Mammary epithelial cell (primary cell): ENCODE measurements at regions of chr3 and their contacts with region 1.

Region 1: GRCh38 chr3:69161587-69162307 is 39.4 kb upstream of the LMOD3 start:
- DNase-seq: peak; percentile 47
- H3K4me3 ChIP-seq: no peak overlapping the region
- H3K27ac ChIP-seq: no peak overlapping the region
- H3K4me1 ChIP-seq: no peaks in the 10 kb centered on the region
- H3K27me3 ChIP-seq: no peaks in the 10 kb centered on the region
- CTCF ChIP-seq: peak; percentile 90 to 93

Region 2: GRCh38 chr3:69120879-69121464 is 40.8 kb before region 1 on chr3:
- CTCF ChIA-PET with region 1: no interaction called
- dilution Hi-C with region 1: no loop called
- in situ Hi-C with region 1: no loop called
- intact Hi-C with region 1: loop called (anchors 2 kb)
- DNase-seq: peak; percentile 67
- H3K4me3 ChIP-seq: no peak overlapping the region
- H3K27ac ChIP-seq: no peak overlapping the region
- H3K4me1 ChIP-seq: peaks cover 12% of the 10 kb centered on the region
- H3K27me3 ChIP-seq: no peaks in the 10 kb centered on the region
- CTCF ChIP-seq: peak; percentile 96 to 99

Region 3: GRCh38 chr3:69260216-69260787 is 98.6 kb after region 1 on chr3:
- CTCF ChIA-PET with region 1: no interaction called
- dilution Hi-C with region 1: no loop called
- in situ Hi-C with region 1: no loop called
- intact Hi-C with region 1: no loop called
- DNase-seq: no peak
- H3K4me3 ChIP-seq: no peak overlapping the region
- H3K27ac ChIP-seq: no peak overlapping the region
- H3K4me1 ChIP-seq: no peaks in the 10 kb centered on the region
- H3K27me3 ChIP-seq: no peaks in the 10 kb centered on the region
- CTCF ChIP-seq: no peak

Region 4: DNA sequence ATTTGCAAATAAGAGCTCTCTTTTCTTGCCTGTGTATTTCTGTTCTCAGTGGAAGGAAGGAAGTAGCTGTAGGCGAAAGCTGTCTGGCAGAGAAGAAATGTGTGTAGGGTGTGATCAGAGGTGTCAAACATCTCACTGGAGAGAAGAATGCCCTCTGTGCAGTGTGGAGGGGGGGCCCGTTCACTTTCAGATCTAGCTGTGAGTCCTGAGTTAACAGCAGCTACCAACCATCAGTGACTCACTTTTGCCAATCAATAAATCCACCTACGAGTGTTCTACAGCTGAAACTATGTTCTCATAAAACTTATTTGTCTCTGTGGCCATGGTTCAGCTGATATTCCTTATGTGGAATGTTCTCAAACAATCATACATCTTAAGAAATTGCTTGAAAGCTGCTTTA is 120.4 kb after region 1 on chr3:
- CTCF ChIA-PET with region 1: no interaction called
- dilution Hi-C with region 1: no loop called
- in situ Hi-C with region 1: no loop called
- intact Hi-C with region 1: no loop called
- DNase-seq: peak; percentile 65
- H3K4me3 ChIP-seq: no peak overlapping the region
- H3K27ac ChIP-seq: no peak overlapping the region
- H3K4me1 ChIP-seq: no peaks in the 10 kb centered on the region
- H3K27me3 ChIP-seq: no peaks in the 10 kb centered on the region
- CTCF ChIP-seq: no peak

Region 5: DNA sequence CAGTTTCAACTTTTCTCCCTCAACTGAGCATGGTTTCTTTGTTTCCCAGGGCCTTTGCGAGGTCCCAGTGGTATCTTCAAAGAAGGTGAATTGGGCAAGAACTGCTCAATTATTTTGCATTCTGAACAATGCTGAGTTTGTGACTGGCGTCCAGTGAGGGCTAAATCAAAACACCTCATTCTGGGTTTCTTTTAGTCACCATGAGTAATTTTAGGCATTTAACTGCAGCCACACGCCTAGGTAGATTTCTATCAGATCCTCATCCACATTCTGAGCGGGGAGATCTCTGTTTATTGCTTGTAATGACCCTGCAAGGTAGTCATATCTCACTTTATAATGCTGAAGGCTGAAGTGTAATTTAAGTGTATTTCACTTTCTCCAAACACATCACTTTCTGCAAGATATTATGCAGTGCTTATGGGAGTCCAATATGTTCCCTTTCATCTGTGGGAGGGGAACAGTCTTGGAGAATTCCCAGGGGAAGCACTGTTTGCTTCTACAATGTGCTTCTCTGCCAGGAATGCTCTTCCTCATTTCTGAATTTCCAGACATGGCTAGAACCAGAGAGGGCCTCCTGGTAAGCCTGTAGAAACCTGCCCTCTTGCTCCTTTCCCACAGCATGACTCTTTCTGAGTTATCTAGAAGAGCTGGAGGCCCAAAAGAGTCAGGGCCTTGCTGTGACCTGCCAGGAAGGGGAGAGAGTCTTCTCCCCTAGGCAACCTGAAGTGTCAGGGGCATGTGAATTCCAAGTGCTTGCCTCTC is 132.4 kb after region 1 on chr3:
- CTCF ChIA-PET with region 1: interaction called, 3 read pairs
- dilution Hi-C with region 1: no loop called
- in situ Hi-C with region 1: no loop called
- intact Hi-C with region 1: loop called (anchors 1 kb)
- DNase-seq: peak; percentile 98
- H3K4me3 ChIP-seq: no peak overlapping the region
- H3K27ac ChIP-seq: peak overlapping the region; percentile 94
- H3K4me1 ChIP-seq: peaks cover 42% of the 10 kb centered on the region
- H3K27me3 ChIP-seq: no peaks in the 10 kb centered on the region
- CTCF ChIP-seq: peak in 1 of 2 donors; percentile 16

Region 6: DNA sequence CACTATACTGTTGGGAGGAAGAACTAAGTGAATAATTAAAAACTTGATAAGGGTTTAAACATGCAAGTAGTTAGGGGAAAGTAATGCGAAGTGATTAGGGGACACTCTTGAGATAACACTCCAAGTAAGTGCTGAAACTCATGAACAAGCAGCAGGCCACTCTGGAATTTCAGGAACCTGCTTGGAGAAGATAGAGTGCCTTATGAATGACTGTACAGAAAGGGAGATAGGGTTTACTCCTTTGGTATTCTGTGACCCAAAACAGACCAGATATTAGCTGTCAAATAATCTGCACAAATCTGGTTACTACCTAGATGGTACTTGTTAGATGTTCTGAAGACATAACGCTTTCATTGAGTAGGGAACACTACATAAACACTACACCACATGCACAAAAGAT is 138.5 kb after region 1 on chr3:
- CTCF ChIA-PET with region 1: interaction called, 6 read pairs
- dilution Hi-C with region 1: loop called (anchors 25 kb)
- in situ Hi-C with region 1: loop called in 1 of 2 experiments (anchors 5 kb)
- intact Hi-C with region 1: no loop called
- DNase-seq: no peak
- H3K4me3 ChIP-seq: no peak overlapping the region
- H3K27ac ChIP-seq: no peak overlapping the region
- H3K4me1 ChIP-seq: peaks cover 3% of the 10 kb centered on the region
- H3K27me3 ChIP-seq: no peaks in the 10 kb centered on the region
- CTCF ChIP-seq: no peak

Region 7: DNA sequence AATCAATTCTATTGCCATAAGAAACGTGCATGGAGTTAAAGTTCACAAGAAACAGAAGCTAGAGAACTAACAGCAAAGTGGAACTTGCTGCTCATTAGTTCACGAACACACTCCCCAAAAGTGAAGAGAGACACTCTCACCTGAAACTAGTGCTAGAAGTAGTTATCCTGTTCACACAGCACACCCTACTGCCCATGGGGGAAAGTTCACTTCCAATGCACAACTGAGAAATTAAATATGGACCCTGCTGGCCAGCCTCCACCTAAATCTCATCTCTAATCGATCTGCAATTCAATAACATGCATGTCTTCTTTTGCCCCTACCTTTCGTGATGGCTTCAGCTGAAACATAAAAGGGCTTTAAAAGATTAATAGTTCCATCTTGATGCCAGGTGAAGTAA is 263.5 kb after region 1 on chr3:
- CTCF ChIA-PET with region 1: interaction called, 3 read pairs
- dilution Hi-C with region 1: no loop called
- in situ Hi-C with region 1: loop called (anchors 10 to 25 kb)
- intact Hi-C with region 1: loop called (anchors 1 kb)
- DNase-seq: peak; percentile 37
- H3K4me3 ChIP-seq: no peak overlapping the region
- H3K27ac ChIP-seq: no peak overlapping the region
- H3K4me1 ChIP-seq: peaks cover 36% of the 10 kb centered on the region
- H3K27me3 ChIP-seq: no peaks in the 10 kb centered on the region
- CTCF ChIP-seq: peak; percentile 67 to 73

Region 8: DNA sequence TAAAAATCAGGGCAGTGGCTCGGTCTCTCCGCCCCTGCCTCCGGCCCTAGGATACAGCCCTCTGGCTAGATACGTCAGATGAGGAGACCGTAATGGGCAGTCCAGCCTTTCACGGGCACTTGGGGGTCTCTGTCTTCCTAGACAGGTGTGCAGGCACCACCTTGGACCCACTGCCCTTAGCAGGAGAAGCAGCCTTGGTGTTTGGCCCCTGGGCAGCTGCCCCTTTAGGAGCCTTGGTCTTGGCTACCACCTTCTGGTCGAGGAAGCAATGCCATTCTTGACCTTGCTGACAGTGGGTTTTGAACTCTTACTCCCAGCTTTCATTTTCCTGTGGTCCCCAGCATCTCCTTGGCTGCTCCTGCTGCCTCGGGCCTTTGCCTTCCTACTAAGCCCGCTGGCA is 373.9 kb after region 1 on chr3:
- CTCF ChIA-PET with region 1: no interaction called
- dilution Hi-C with region 1: no loop called
- in situ Hi-C with region 1: no loop called
- intact Hi-C with region 1: loop called (anchors 1 kb)
- DNase-seq: no peak
- H3K4me3 ChIP-seq: no peak overlapping the region
- H3K27ac ChIP-seq: no peak overlapping the region
- H3K4me1 ChIP-seq: peaks cover 27% of the 10 kb centered on the region
- H3K27me3 ChIP-seq: no peaks in the 10 kb centered on the region
- CTCF ChIP-seq: no peak